ENCODE measurements at regions of chr6 and their contacts with region 1.

Region 1: GRCh38 chr6:137641474-137642077 is 147.4 kb upstream of the OLIG3 start:
- DNase-seq: peak; percentile 47 to 67 (median 62)
- H3K4me3 ChIP-seq: no peak overlapping the region
- H3K4me3 Mint-ChIP-seq: no peak overlapping the region
- H3K27ac ChIP-seq: no peak overlapping the region
- H3K27ac Mint-ChIP-seq: no peak overlapping the region
- H3K4me1 ChIP-seq: peaks cover 8 to 10% of the 10 kb centered on the region in 2 donors
- H3K4me1 Mint-ChIP-seq: peaks cover 12% of the 10 kb centered on the region
- H3K27me3 ChIP-seq: no peaks in the 10 kb centered on the region
- H3K27me3 Mint-ChIP-seq: peaks cover 2 to 7% (median 3%) of the 10 kb centered on the region in 3 donors
- CTCF ChIP-seq: peak; percentile 77

Region 2: GRCh38 chr6:136967876-136968752 is 673.5 kb before region 1 on chr6:
- intact Hi-C with region 1: loop called (anchors 2 to 5 kb)
- DNase-seq: peak; percentile 23 to 54 (median 50)
- H3K4me3 ChIP-seq: no peak overlapping the region
- H3K4me3 Mint-ChIP-seq: no peak overlapping the region
- H3K27ac ChIP-seq: no peak overlapping the region
- H3K27ac Mint-ChIP-seq: peak overlapping the region in 1 of 7 donors; percentile 47
- H3K4me1 ChIP-seq: no peaks in the 10 kb centered on the region
- H3K4me1 Mint-ChIP-seq: peaks cover 3% of the 10 kb centered on the region
- H3K27me3 ChIP-seq: peaks cover 0 to 5% of the 10 kb centered on the region in 2 donors
- H3K27me3 Mint-ChIP-seq: peaks cover 13 to 36% (median 14%) of the 10 kb centered on the region in 3 donors
- CTCF ChIP-seq: peak; percentile 77

Region 3: GRCh38 chr6:137076277-137077068 is 565.1 kb before region 1 on chr6:
- intact Hi-C with region 1: loop called in 1 of 2 experiments (anchors 5 kb)
- DNase-seq: peak; percentile 68 to 82 (median 80)
- H3K4me3 ChIP-seq: no peak overlapping the region
- H3K4me3 Mint-ChIP-seq: no peak overlapping the region
- H3K27ac ChIP-seq: no peak overlapping the region
- H3K27ac Mint-ChIP-seq: no peak overlapping the region
- H3K4me1 ChIP-seq: peaks cover 6 to 7% of the 10 kb centered on the region in 2 donors
- H3K4me1 Mint-ChIP-seq: peaks cover 8% of the 10 kb centered on the region
- H3K27me3 ChIP-seq: no peaks in the 10 kb centered on the region
- H3K27me3 Mint-ChIP-seq: peaks cover 13 to 34% (median 21%) of the 10 kb centered on the region in 3 donors
- CTCF ChIP-seq: peak; percentile 85

Region 4: GRCh38 chr6:137094411-137095008 is 547.1 kb before region 1 on chr6:
- intact Hi-C with region 1: loop called (anchors 5 kb)
- DNase-seq: peak; percentile 45 to 68 (median 62)
- H3K4me3 ChIP-seq: no peak overlapping the region
- H3K4me3 Mint-ChIP-seq: no peak overlapping the region
- H3K27ac ChIP-seq: no peak overlapping the region
- H3K27ac Mint-ChIP-seq: no peak overlapping the region
- H3K4me1 ChIP-seq: peaks cover 3 to 9% of the 10 kb centered on the region in 2 donors
- H3K4me1 Mint-ChIP-seq: peaks cover 14% of the 10 kb centered on the region
- H3K27me3 ChIP-seq: no peaks in the 10 kb centered on the region
- H3K27me3 Mint-ChIP-seq: peaks cover 0 to 5% (median 2%) of the 10 kb centered on the region in 3 donors
- CTCF ChIP-seq: peak; percentile 84

Measured in CD14-positive monocyte (primary cell).